ENCODE measurements at regions of chr7 and their contacts with region 1.

Region 1: GRCh38 chr7:4775250-4775847 is at the start of gene AP5Z1:
- DNase-seq: peak; percentile 91
- ATAC-seq: peak; percentile 93
- H3K4me3 ChIP-seq: peak within 1 kb of the TSS; percentile 96 to 98 (median 97)
- H3K27ac ChIP-seq: peak within 1 kb of the TSS; percentile 94
- H3K4me1 ChIP-seq: peaks cover 39% of the 10 kb centered on the region
- H3K27me3 ChIP-seq: no peaks in the 10 kb centered on the region; a peak in 1 of 5 replicates
- CTCF ChIP-seq: peak; percentile 7; the same call in 1 of the 2 replicates
- EP300 ChIP-seq: no peak; a peak in 2 of 4 replicates
- POLR2A ChIP-seq: peak; percentile 76 to 86
- RAD21 ChIP-seq: no peak; the same call in none of the 2 replicates
- total RNA-seq, gene AP5Z1: 7.4 and 15.1 TPM in 2 replicates

Region 2: DNA sequence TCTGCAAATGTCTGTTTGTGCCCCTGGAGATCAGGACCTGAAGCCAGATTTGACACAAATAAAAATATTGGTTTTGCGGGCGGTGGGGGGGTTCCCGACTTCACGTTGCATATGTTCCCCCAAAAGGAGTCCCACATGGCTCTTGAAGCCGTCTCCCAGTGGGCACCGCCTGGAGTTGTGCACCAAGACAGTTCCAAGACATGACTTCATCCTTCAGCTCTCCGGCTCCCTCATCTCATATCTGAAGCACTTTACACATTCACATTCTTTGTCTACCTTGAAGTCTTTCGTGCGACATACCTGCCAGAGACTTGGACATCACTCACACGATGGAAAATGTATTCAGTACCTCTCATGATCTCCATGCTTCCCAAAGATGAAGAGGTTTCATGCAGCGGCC is 456.1 kb before region 1 on chr7:
- CTCF ChIA-PET with region 1: no interaction called
- POLR2A ChIA-PET with region 1: no interaction called
- in situ Hi-C with region 1: no loop called
- intact Hi-C with region 1: no loop called
- DNase-seq: no peak
- ATAC-seq: no peak
- H3K4me3 ChIP-seq: no peak overlapping the region
- H3K27ac ChIP-seq: no peak overlapping the region
- H3K4me1 ChIP-seq: no peaks in the 10 kb centered on the region
- H3K27me3 ChIP-seq: no peaks in the 10 kb centered on the region
- CTCF ChIP-seq: no peak
- EP300 ChIP-seq: no peak
- POLR2A ChIP-seq: no peak
- RAD21 ChIP-seq: no peak

Region 3: GRCh38 chr7:4631664-4632171 is 143.6 kb before region 1 on chr7:
- CTCF ChIA-PET with region 1: no interaction called
- POLR2A ChIA-PET with region 1: no interaction called
- in situ Hi-C with region 1: no loop called
- intact Hi-C with region 1: no loop called
- DNase-seq: peak; percentile 84
- ATAC-seq: peak; percentile 95
- H3K4me3 ChIP-seq: peak overlapping the region; percentile 14 to 53 (median 31); a peak in 3 of 6 replicates
- H3K27ac ChIP-seq: no peak overlapping the region
- H3K4me1 ChIP-seq: peaks cover 16% of the 10 kb centered on the region
- H3K27me3 ChIP-seq: no peaks in the 10 kb centered on the region
- CTCF ChIP-seq: peak; percentile 93
- EP300 ChIP-seq: no peak
- POLR2A ChIP-seq: no peak
- RAD21 ChIP-seq: peak; percentile 84

Region 4: GRCh38 chr7:4725014-4725849 is 50.1 kb before region 1 on chr7:
- CTCF ChIA-PET with region 1: no interaction called
- POLR2A ChIA-PET with region 1: interaction called, 11 read pairs
- in situ Hi-C with region 1: no loop called
- intact Hi-C with region 1: no loop called
- DNase-seq: peak; percentile 74
- ATAC-seq: peak; percentile 84
- H3K4me3 ChIP-seq: peak overlapping the region; percentile 65 to 74 (median 71)
- H3K27ac ChIP-seq: peak overlapping the region; percentile 75
- H3K4me1 ChIP-seq: peaks cover 28% of the 10 kb centered on the region
- H3K27me3 ChIP-seq: no peaks in the 10 kb centered on the region
- CTCF ChIP-seq: peak; percentile 31; the same call in 1 of the 2 replicates
- EP300 ChIP-seq: no peak
- POLR2A ChIP-seq: peak in 1 of 2 experiments; percentile 61; a peak in 1 of 4 replicates
- RAD21 ChIP-seq: no peak

Region 5: GRCh38 chr7:4738711-4739527 is 36.4 kb before region 1 on chr7:
- CTCF ChIA-PET with region 1: no interaction called
- POLR2A ChIA-PET with region 1: interaction called, 15 read pairs
- in situ Hi-C with region 1: no loop called
- intact Hi-C with region 1: no loop called
- DNase-seq: peak; percentile 77
- ATAC-seq: peak; percentile 54
- H3K4me3 ChIP-seq: peak overlapping the region; percentile 27 to 56 (median 36); a peak in 5 of 6 replicates
- H3K27ac ChIP-seq: peak overlapping the region; percentile 83
- H3K4me1 ChIP-seq: peaks cover 64% of the 10 kb centered on the region
- H3K27me3 ChIP-seq: no peaks in the 10 kb centered on the region
- CTCF ChIP-seq: peak; percentile 54
- EP300 ChIP-seq: 0 out of 4 replicates have a peak, but pooled peaks of 1 of the 2 experiments have one; percentile 8
- POLR2A ChIP-seq: peak in 1 of 2 experiments; percentile 20; a peak in 1 of 4 replicates
- RAD21 ChIP-seq: no peak

Region 6: DNA sequence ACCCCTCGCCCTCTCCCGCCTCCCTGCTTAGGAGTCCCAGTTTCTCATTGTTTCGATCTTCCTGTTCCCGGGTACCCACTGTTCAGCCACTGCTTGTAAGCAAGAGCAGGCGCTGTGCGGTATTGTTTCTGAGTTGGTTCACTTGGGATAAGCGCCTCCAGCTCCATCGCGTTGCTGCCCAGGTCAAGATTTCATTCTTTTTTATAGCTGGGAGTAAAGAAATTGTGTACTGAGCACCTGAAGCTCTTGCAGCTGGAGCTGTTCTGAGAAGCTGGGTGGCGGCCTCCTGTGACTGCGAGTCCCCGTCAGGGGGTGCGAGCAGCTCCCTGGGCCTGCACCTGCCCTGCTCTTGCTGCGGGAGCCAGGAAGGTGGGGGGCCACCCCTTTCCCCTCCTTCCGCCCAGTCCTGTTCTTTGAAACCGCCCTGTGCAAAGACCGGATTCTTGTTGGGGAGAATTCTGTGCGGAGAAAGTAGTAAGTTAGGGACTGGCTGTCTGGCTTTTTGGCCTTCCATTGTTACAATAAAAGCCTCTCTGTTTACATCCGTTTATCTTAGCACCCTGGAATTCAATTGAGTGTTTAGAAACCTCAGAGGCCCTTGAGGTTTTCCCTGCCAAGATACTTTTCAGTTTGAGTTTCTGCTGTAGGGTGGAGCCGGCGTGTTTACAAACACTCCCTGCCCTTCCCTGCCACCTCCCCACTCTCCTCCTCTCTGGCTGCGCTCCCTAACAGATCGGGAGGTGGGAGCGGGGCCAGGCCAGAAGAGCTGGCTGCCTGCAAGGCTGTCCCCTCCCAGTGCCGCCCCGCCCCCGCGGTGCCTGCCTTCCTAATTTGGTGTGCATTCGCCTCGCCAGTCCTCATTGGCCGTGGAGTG is 30.7 kb before region 1 on chr7:
- CTCF ChIA-PET with region 1: no interaction called
- POLR2A ChIA-PET with region 1: interaction called, 15 read pairs
- in situ Hi-C with region 1: no loop called
- intact Hi-C with region 1: no loop called
- DNase-seq: peak; percentile 93
- ATAC-seq: peak; percentile 91
- H3K4me3 ChIP-seq: peak overlapping the region in 2 of 3 experiments; percentile 6 to 43; a peak in 3 of 6 replicates
- H3K27ac ChIP-seq: peak overlapping the region; percentile 84
- H3K4me1 ChIP-seq: peaks cover 65% of the 10 kb centered on the region
- H3K27me3 ChIP-seq: no peaks in the 10 kb centered on the region
- CTCF ChIP-seq: 0 out of 2 replicates have a peak, but pooled peaks have one; percentile 3
- EP300 ChIP-seq: peak in 1 of 2 experiments; percentile 73; a peak in 2 of 4 replicates
- POLR2A ChIP-seq: peak in 1 of 2 experiments; percentile 52; a peak in 2 of 4 replicates
- RAD21 ChIP-seq: no peak; the same call in 1 of the 2 replicates

Region 7: DNA sequence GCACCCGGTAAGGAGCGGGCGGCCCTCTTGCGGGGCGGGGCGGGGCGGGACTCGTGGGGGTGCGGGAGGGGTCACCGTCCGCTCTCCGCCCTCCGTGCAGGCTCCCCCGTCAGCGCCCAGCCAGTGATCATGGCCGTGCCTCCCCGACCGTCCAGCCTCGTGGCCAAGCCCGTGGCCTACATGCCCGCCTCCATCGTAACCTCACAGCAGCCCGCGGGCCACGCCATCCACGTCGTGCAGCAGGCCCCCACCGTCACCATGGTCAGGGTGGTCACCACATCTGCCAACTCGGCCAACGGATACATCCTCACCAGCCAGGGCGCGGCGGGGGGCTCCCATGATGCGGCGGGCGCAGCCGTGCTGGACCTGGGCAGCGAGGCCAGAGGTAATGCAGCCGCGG is 16.1 kb before region 1 on chr7:
- CTCF ChIA-PET with region 1: no interaction called
- POLR2A ChIA-PET with region 1: no interaction called
- in situ Hi-C with region 1: no loop called
- intact Hi-C with region 1: no loop called
- DNase-seq: no peak
- ATAC-seq: no peak
- H3K4me3 ChIP-seq: no peak overlapping the region
- H3K27ac ChIP-seq: no peak overlapping the region
- H3K4me1 ChIP-seq: no peaks in the 10 kb centered on the region
- H3K27me3 ChIP-seq: no peaks in the 10 kb centered on the region
- CTCF ChIP-seq: no peak
- EP300 ChIP-seq: no peak
- POLR2A ChIP-seq: no peak
- RAD21 ChIP-seq: no peak

Region 8: DNA sequence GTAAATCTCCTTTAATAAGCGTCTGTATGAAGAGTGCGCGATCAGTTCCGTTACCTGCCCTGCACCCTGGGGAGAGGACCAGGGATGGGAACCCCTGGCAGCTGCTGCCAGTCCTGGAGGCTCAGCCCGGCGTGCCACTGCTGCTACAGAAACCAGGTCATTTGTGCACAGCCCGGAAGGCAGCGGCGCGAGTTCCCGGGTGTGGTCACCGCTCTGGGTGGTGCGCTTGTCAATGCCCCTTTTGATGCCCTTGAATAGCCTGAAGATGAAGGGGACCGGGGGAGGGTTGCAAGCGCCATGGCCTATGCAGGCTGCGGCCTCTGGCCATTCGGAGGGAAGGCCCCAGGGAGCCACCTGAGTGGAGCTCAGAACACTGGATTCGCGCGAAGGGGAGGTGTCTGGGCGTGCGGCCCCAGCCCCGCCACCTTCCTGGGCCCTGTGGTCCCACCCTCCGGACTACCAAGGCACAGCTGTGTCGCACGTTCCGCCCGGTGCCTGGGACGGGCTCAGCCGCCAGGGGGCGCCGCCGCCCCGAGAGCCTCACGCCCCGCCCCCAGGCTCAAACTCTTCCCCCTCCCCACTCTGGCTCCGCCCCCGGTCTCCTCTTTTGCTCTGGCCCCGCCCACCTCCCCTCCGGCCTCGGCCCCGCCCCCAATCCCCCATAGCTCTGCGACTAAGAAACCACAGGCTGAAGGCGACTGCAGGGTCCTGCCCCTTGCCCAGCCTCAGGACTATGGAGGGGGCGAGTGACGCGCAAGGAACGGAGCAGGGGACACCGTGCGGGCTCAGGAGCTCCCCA is 16.6 kb after region 1 on chr7:
- CTCF ChIA-PET with region 1: no interaction called
- POLR2A ChIA-PET with region 1: interaction called, 17 read pairs
- in situ Hi-C with region 1: no loop called
- intact Hi-C with region 1: no loop called
- DNase-seq: peak; percentile 23
- ATAC-seq: peak; percentile 69
- H3K4me3 ChIP-seq: no peak overlapping the region
- H3K27ac ChIP-seq: no peak overlapping the region
- H3K4me1 ChIP-seq: peaks cover 9% of the 10 kb centered on the region
- H3K27me3 ChIP-seq: no peaks in the 10 kb centered on the region
- CTCF ChIP-seq: peak; percentile 68
- EP300 ChIP-seq: no peak
- POLR2A ChIP-seq: no peak
- RAD21 ChIP-seq: 0 out of 2 replicates have a peak, but pooled peaks have one; percentile 35

Region 9: GRCh38 chr7:4797858-4798705 is 22.7 kb after region 1 on chr7:
- CTCF ChIA-PET with region 1: no interaction called
- POLR2A ChIA-PET with region 1: interaction called, 17 read pairs
- in situ Hi-C with region 1: no loop called
- intact Hi-C with region 1: no loop called
- DNase-seq: peak; percentile 31
- ATAC-seq: peak; percentile 76
- H3K4me3 ChIP-seq: peak overlapping the region in 1 of 3 experiments; percentile 26; a peak in 1 of 6 replicates
- H3K27ac ChIP-seq: no peak overlapping the region
- H3K4me1 ChIP-seq: peaks cover 8% of the 10 kb centered on the region
- H3K27me3 ChIP-seq: peaks cover 1 to 12% of the 10 kb centered on the region in 2 experiments; a peak in 2 of 5 replicates
- CTCF ChIP-seq: peak; percentile 92
- EP300 ChIP-seq: no peak
- POLR2A ChIP-seq: no peak
- RAD21 ChIP-seq: peak; percentile 82

Measured in HepG2 (cell line).